ENCODE measurements at regions of chr17 and their contacts with region 1.

Region 1: GRCh38 chr17:36722121-36722902 is 120.9 kb downstream of the MRM1 start:
- DNase-seq: no peak
- H3K4me3 ChIP-seq: peak overlapping the region in 2 of 3 experiments; percentile 6 to 12
- H3K27ac ChIP-seq: no peak overlapping the region
- H3K4me1 ChIP-seq: no peaks in the 10 kb centered on the region
- H3K27me3 ChIP-seq: peaks cover 9% of the 10 kb centered on the region
- CTCF ChIP-seq: no peak

Region 2: GRCh38 chr17:36647636-36648035 is 74.7 kb before region 1 on chr17:
- CTCF ChIA-PET with region 1: no interaction called
- dilution Hi-C with region 1: loop called (anchors 5 kb)
- in situ Hi-C with region 1: no loop called
- intact Hi-C with region 1: no loop called
- DNase-seq: no peak
- H3K4me3 ChIP-seq: no peak overlapping the region
- H3K27ac ChIP-seq: no peak overlapping the region
- H3K4me1 ChIP-seq: no peaks in the 10 kb centered on the region
- H3K27me3 ChIP-seq: peaks cover 18% of the 10 kb centered on the region
- CTCF ChIP-seq: peak in 1 of 2 donors; percentile 6

Region 3: GRCh38 chr17:36686111-36686669 is 36.1 kb before region 1 on chr17:
- CTCF ChIA-PET with region 1: no interaction called
- dilution Hi-C with region 1: loop called (anchors 5 kb)
- in situ Hi-C with region 1: no loop called
- intact Hi-C with region 1: no loop called
- DNase-seq: peak; percentile 58
- H3K4me3 ChIP-seq: no peak overlapping the region
- H3K27ac ChIP-seq: no peak overlapping the region
- H3K4me1 ChIP-seq: peaks cover 8% of the 10 kb centered on the region
- H3K27me3 ChIP-seq: peaks cover 16% of the 10 kb centered on the region
- CTCF ChIP-seq: no peak

Measured in mammary epithelial cell (primary cell).